ENCODE measurements at regions of chr5 and their contacts with region 1.

Region 1: GRCh38 chr5:169637085-169637548 is at the start of gene DOCK2:
- DNase-seq: peak; percentile 54 to 72 (median 62)
- ATAC-seq: peak; percentile 88
- H3K4me3 ChIP-seq: peak within 1 kb of the TSS; percentile 97
- H3K4me3 Mint-ChIP-seq: peak within 1 kb of the TSS; percentile 91 to 95 (median 94)
- H3K27ac ChIP-seq: peak within 1 kb of the TSS; percentile 75
- H3K27ac Mint-ChIP-seq: peak within 1 kb of the TSS; percentile 88 to 98 (median 94)
- H3K4me1 ChIP-seq: peaks cover 19 to 38% of the 10 kb centered on the region in 2 donors
- H3K4me1 Mint-ChIP-seq: peaks cover 38 to 56% (median 48%) of the 10 kb centered on the region in 7 donors
- H3K27me3 ChIP-seq: no peaks in the 10 kb centered on the region
- H3K27me3 Mint-ChIP-seq: peaks cover 0 to 6% (median 0%) of the 10 kb centered on the region in 5 donors
- total RNA-seq, gene DOCK2: 182 to 345 (median 235) TPM

Region 2: GRCh38 chr5:168486136-168486879 is 1150.8 kb before region 1 on chr5 and contains the start of gene RARS1:
- CTCF ChIA-PET with region 1: no interaction called
- POLR2A ChIA-PET with region 1: no interaction called
- intact Hi-C with region 1: loop called in 1 of 2 experiments (anchors 5 kb)
- DNase-seq: peak; percentile 65 to 89 (median 76)
- ATAC-seq: peak; percentile 98
- H3K4me3 ChIP-seq: peak within 1 kb of the TSS; percentile 93
- H3K4me3 Mint-ChIP-seq: peak within 1 kb of the TSS; percentile 96 to 100 (median 99)
- H3K27ac ChIP-seq: peak within 1 kb of the TSS; percentile 73
- H3K27ac Mint-ChIP-seq: peak within 1 kb of the TSS; percentile 88 to 96 (median 92)
- H3K4me1 ChIP-seq: peaks cover 7% of the 10 kb centered on the region in 2 donors
- H3K4me1 Mint-ChIP-seq: peaks cover 30 to 52% (median 44%) of the 10 kb centered on the region in 7 donors
- H3K27me3 ChIP-seq: no peaks in the 10 kb centered on the region
- H3K27me3 Mint-ChIP-seq: peaks cover 0 to 3% (median 0%) of the 10 kb centered on the region in 5 donors
- total RNA-seq, gene RARS1: 59.1 to 110 (median 81.3) TPM

Region 3: GRCh38 chr5:169591636-169592035 is 45.5 kb before region 1 on chr5:
- CTCF ChIA-PET with region 1: no interaction called
- POLR2A ChIA-PET with region 1: no interaction called
- intact Hi-C with region 1: no loop called
- DNase-seq: no peak
- ATAC-seq: no peak
- H3K4me3 ChIP-seq: no peak overlapping the region
- H3K4me3 Mint-ChIP-seq: no peak overlapping the region
- H3K27ac ChIP-seq: no peak overlapping the region
- H3K27ac Mint-ChIP-seq: no peak overlapping the region
- H3K4me1 ChIP-seq: no peaks in the 10 kb centered on the region
- H3K4me1 Mint-ChIP-seq: peaks cover 0 to 10% (median 5%) of the 10 kb centered on the region in 7 donors
- H3K27me3 ChIP-seq: no peaks in the 10 kb centered on the region
- H3K27me3 Mint-ChIP-seq: no peaks in the 10 kb centered on the region

Region 4: GRCh38 chr5:169650701-169651331 is 13.7 kb after region 1 on chr5:
- CTCF ChIA-PET with region 1: no interaction called
- POLR2A ChIA-PET with region 1: interaction called, 32 read pairs
- intact Hi-C with region 1: loop called (anchors 1 kb)
- DNase-seq: no peak
- ATAC-seq: peak; percentile 61
- H3K4me3 ChIP-seq: peak overlapping the region; percentile 25
- H3K4me3 Mint-ChIP-seq: peak overlapping the region; percentile 20 to 89 (median 66)
- H3K27ac ChIP-seq: peak overlapping the region; percentile 24
- H3K27ac Mint-ChIP-seq: peak overlapping the region; percentile 73 to 96 (median 91)
- H3K4me1 ChIP-seq: peaks cover 62 to 74% of the 10 kb centered on the region in 2 donors
- H3K4me1 Mint-ChIP-seq: peaks cover 79 to 99% (median 85%) of the 10 kb centered on the region in 7 donors
- H3K27me3 ChIP-seq: no peaks in the 10 kb centered on the region
- H3K27me3 Mint-ChIP-seq: no peaks in the 10 kb centered on the region

Region 5: GRCh38 chr5:169670769-169671525 is 33.8 kb after region 1 on chr5:
- CTCF ChIA-PET with region 1: no interaction called
- POLR2A ChIA-PET with region 1: no interaction called
- intact Hi-C with region 1: loop called in 1 of 2 experiments (anchors 1 kb)
- DNase-seq: no peak
- ATAC-seq: no peak
- H3K4me3 ChIP-seq: no peak overlapping the region
- H3K4me3 Mint-ChIP-seq: peak overlapping the region in 1 of 10 donors; percentile 5
- H3K27ac ChIP-seq: no peak overlapping the region
- H3K27ac Mint-ChIP-seq: peak overlapping the region in 2 of 9 donors; percentile 48 to 81
- H3K4me1 ChIP-seq: no peaks in the 10 kb centered on the region
- H3K4me1 Mint-ChIP-seq: peaks cover 4 to 32% (median 8%) of the 10 kb centered on the region in 7 donors
- H3K27me3 ChIP-seq: no peaks in the 10 kb centered on the region
- H3K27me3 Mint-ChIP-seq: no peaks in the 10 kb centered on the region

Region 6: DNA sequence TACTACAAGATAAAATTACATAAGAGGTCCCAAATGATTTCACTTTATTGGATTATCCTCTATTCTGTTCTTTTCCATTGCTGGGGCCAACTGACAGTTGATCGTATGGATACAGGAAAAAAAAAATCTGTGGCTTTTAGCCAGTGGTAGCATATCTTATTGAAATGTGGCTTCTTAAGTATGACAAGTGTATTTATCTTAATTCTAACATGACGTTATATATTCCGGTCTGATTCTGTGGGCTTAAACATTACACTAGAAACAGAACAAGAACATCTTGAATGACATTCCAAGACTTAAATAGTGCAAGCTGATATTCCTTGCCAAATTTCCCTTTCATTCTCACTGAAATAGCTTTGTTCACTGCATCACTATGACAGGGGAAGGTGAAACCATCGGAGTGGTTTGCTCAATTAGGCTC is 225.3 kb after region 1 on chr5:
- CTCF ChIA-PET with region 1: no interaction called
- POLR2A ChIA-PET with region 1: no interaction called
- intact Hi-C with region 1: no loop called
- DNase-seq: no peak
- ATAC-seq: no peak
- H3K4me3 ChIP-seq: no peak overlapping the region
- H3K4me3 Mint-ChIP-seq: no peak overlapping the region
- H3K27ac ChIP-seq: no peak overlapping the region
- H3K27ac Mint-ChIP-seq: no peak overlapping the region
- H3K4me1 ChIP-seq: no peaks in the 10 kb centered on the region
- H3K4me1 Mint-ChIP-seq: peaks cover 21 to 28% (median 25%) of the 10 kb centered on the region in 7 donors
- H3K27me3 ChIP-seq: no peaks in the 10 kb centered on the region
- H3K27me3 Mint-ChIP-seq: no peaks in the 10 kb centered on the region

Region 7: DNA sequence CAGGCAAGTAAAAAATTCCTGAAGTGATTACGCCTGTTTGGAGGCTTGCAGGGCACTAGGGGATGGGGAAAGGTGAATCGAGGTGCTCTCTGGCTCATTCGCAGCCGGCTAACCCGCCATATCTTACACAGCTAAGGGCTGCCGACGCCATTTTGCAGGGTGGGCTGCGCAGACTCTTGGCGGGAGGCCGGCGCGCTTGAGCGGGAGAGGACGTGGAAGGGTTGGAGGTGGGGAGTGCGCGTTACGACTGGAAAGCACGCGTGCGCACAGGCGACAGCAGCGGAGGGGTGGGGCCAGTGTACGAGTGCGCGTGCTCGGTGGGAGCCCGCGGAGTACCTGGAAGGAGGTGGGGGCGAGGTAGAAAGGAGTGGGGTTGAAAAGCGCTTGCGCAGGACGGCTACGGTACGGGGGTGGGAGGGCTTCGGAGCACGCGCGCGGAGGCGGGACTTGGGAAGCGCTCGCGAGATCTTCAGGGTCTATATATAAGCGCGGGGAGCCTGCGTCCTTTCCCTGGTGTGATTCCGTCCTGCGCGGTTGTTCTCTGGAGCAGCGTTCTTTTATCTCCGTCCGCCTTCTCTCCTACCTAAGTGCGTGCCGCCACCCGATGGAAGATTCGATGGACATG is 1750.3 kb after region 1 on chr5 and contains the start of gene NPM1:
- CTCF ChIA-PET with region 1: no interaction called
- POLR2A ChIA-PET with region 1: interaction called, 4 read pairs
- intact Hi-C with region 1: loop called in 1 of 2 experiments (anchors 2 kb)
- DNase-seq: peak; percentile 90 to 99 (median 98)
- ATAC-seq: peak; percentile 93
- H3K4me3 ChIP-seq: peak within 1 kb of the TSS; percentile 91
- H3K4me3 Mint-ChIP-seq: peak within 1 kb of the TSS; percentile 92 to 99 (median 98)
- H3K27ac ChIP-seq: peak within 1 kb of the TSS; percentile 88
- H3K27ac Mint-ChIP-seq: peak within 1 kb of the TSS; percentile 96 to 100 (median 98)
- H3K4me1 ChIP-seq: peaks cover 31 to 40% of the 10 kb centered on the region in 2 donors
- H3K4me1 Mint-ChIP-seq: peaks cover 25 to 52% (median 49%) of the 10 kb centered on the region in 7 donors
- H3K27me3 ChIP-seq: no peaks in the 10 kb centered on the region
- H3K27me3 Mint-ChIP-seq: peaks cover 0 to 6% (median 0%) of the 10 kb centered on the region in 5 donors
- total RNA-seq, gene NPM1: 807 to 1,238 (median 1,192) TPM

Measured in naive thymus-derived CD4-positive, alpha-beta T cell (primary cell).